Activated B cell treated with CpG ODN at 0.5 μM for 24 hours (primary cell): ENCODE measurements at regions of chr22 and their contacts with region 1.

Region 1: GRCh38 chr22:39068033-39068791 is 8.9 kb upstream of the APOBEC3G start:
- DNase-seq: no peak
- ATAC-seq: no peak
- H3K4me3 Mint-ChIP-seq: no peak overlapping the region
- H3K27ac Mint-ChIP-seq: no peak overlapping the region
- H3K4me1 Mint-ChIP-seq: peaks cover 54% of the 10 kb centered on the region
- H3K27me3 Mint-ChIP-seq: no peaks in the 10 kb centered on the region
- CTCF ChIP-seq: no peak

Region 2: GRCh38 chr22:39013942-39014722 is 54.1 kb before region 1 on chr22 and contains the start of gene APOBEC3C:
- CTCF ChIA-PET with region 1: no interaction called
- POLR2A ChIA-PET with region 1: interaction called, 14 read pairs
- intact Hi-C with region 1: loop called (anchors 2 kb)
- DNase-seq: peak; percentile 65
- ATAC-seq: peak; percentile 96
- H3K4me3 Mint-ChIP-seq: peak within 1 kb of the TSS; percentile 96
- H3K27ac Mint-ChIP-seq: peak within 1 kb of the TSS; percentile 95
- H3K4me1 Mint-ChIP-seq: peaks cover 57% of the 10 kb centered on the region
- H3K27me3 Mint-ChIP-seq: no peaks in the 10 kb centered on the region
- CTCF ChIP-seq: no peak
- total RNA-seq, gene APOBEC3C: 173 and 179 TPM in 2 replicates

Region 3: DNA sequence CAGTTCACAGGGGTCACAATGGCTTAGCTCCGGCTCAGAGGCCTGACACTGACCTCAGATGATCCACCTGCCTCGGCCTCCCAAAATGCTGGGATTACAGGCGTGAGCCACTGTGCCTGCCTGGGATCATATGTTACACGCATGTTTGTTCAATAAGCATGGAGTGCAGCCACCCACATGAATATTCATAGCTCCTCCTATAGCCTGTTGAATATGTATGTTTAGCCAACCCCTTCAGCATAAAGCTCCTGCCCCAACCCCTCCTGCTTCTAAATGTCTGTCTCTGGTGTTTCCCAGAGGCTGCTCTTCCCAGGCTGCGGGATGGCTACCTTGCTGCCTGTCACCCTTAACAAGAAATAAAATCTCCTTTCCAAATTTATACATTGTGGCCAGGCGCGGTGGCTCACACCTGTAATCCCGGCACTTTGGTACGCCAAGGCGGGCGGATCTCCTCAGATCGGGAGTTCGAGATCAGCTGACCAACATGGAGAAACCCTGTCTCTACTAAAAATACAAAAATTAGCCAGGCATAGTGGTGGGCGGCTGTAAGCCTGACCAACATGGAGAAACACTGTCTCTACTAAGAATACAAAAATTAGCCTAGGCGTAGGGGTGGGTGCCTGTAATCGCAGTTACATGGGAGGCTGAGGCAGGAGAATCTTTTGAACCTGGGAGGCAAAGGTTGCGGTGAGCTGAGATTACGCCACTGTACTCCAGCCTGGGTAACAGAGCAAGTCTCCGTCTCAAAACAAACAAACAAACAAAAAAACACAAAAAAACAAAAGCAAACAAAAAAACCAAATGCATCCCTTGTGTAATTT is 28.7 kb before region 1 on chr22:
- CTCF ChIA-PET with region 1: no interaction called
- POLR2A ChIA-PET with region 1: interaction called, 3 read pairs
- intact Hi-C with region 1: loop called (anchors 2 kb)
- DNase-seq: no peak
- ATAC-seq: no peak
- H3K4me3 Mint-ChIP-seq: peak overlapping the region; percentile 90
- H3K27ac Mint-ChIP-seq: peak overlapping the region; percentile 83
- H3K4me1 Mint-ChIP-seq: peaks cover 43% of the 10 kb centered on the region
- H3K27me3 Mint-ChIP-seq: no peaks in the 10 kb centered on the region
- CTCF ChIP-seq: no peak

Region 4: GRCh38 chr22:39080052-39080762 is 12.0 kb after region 1 on chr22:
- CTCF ChIA-PET with region 1: no interaction called
- POLR2A ChIA-PET with region 1: interaction called, 47 read pairs
- intact Hi-C with region 1: loop called (anchors 1 kb)
- DNase-seq: peak; percentile 43
- ATAC-seq: peak; percentile 29
- H3K4me3 Mint-ChIP-seq: peak overlapping the region; percentile 77
- H3K27ac Mint-ChIP-seq: peak overlapping the region; percentile 79
- H3K4me1 Mint-ChIP-seq: peaks cover 63% of the 10 kb centered on the region
- H3K27me3 Mint-ChIP-seq: no peaks in the 10 kb centered on the region
- CTCF ChIP-seq: no peak

Region 5: DNA sequence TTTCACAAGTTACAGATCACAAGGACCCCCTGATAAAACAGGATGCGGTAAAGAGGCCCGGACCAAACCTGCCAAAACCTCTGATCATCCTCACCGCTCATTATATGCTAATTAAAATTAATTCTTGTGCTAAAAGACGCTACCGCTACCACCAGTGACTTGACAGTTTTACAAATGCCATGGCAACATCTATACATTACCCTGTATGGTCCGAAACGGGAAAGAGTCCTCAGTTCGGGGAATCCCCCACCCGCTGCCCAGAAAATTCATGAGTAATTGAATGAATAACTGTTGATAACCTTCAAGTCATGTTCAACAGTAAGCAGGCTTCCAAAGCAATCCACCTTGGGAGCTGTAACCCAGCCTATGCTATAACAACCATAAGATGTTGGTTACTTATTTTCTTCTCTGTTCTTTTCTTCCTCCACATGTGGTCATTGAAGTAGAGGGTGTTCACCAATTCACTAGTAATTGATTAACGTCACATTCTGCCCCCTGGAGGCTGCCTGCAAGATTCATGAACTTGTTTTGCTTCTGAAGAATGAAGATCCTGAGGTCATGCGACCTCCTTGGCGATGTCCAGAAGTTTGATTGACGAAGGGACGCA is 49.5 kb after region 1 on chr22:
- CTCF ChIA-PET with region 1: no interaction called
- POLR2A ChIA-PET with region 1: interaction called, 8 read pairs
- intact Hi-C with region 1: loop called (anchors 1 kb)
- DNase-seq: peak; percentile 37
- ATAC-seq: peak; percentile 64
- H3K4me3 Mint-ChIP-seq: peak overlapping the region; percentile 67
- H3K27ac Mint-ChIP-seq: peak overlapping the region; percentile 86
- H3K4me1 Mint-ChIP-seq: peaks cover 52% of the 10 kb centered on the region
- H3K27me3 Mint-ChIP-seq: no peaks in the 10 kb centered on the region
- CTCF ChIP-seq: no peak

Region 6: GRCh38 chr22:39514373-39514973 is 446.3 kb after region 1 on chr22:
- CTCF ChIA-PET with region 1: no interaction called
- POLR2A ChIA-PET with region 1: no interaction called
- intact Hi-C with region 1: no loop called
- DNase-seq: no peak
- ATAC-seq: peak; percentile 45
- H3K4me3 Mint-ChIP-seq: no peak overlapping the region
- H3K27ac Mint-ChIP-seq: peak overlapping the region; percentile 24
- H3K4me1 Mint-ChIP-seq: peaks cover 28% of the 10 kb centered on the region
- H3K27me3 Mint-ChIP-seq: no peaks in the 10 kb centered on the region
- CTCF ChIP-seq: no peak